Colonic mucosa (tissue), 4 donors: ENCODE measurements at regions of chr12 and their contacts with region 1.

Region 1: DNA sequence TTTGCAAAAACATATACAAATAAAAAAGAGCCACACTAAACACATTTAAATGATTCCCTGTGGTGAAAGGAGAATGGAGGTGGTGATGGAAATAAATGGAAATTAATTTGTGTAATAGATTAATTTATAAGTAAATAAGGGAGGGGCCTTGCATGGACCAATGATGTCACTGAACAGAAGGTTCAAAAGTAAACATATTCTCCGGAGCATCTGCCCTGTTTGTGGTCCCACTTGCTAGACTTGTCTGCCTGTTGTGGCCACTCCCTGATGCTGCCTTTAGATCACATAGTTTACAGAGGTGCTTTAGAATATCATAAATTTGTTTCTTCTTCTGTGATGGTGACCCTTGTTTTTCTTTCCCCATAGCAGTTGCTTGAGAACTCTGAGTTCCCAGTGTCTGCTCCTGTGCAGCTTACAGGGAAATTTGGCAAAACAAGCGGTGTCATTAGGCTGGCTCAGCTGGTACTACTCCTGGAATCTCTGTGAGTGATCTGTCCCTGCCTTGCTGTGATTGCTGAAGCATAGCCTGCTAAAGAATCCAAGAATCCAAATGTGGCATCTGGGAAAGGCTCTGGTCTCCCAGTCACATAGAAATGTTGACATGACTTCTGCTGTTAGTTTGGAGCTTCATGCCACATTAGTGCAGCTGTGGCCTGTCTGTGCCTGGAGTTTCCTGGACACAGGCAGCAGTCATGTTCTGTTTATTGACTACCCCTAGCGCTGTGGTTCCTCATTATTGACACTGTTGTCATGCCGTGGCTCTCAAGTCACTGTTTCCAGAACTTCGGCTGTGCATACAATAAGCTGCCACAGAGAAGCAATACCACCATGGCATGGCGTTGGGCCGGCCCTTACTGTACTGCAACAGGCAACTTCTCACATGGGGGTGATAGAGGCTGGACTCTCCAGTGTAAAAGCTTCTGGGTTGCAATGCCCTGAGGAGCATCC is 166.6 kb downstream of the MYRFL start:
- DNase-seq: no peak
- H3K4me3 ChIP-seq: no peak overlapping the region
- H3K27ac ChIP-seq: no peak overlapping the region
- H3K4me1 ChIP-seq: no peaks in the 10 kb centered on the region
- H3K27me3 ChIP-seq: no peaks in the 10 kb centered on the region
- CTCF ChIP-seq: no peak

Region 2: DNA sequence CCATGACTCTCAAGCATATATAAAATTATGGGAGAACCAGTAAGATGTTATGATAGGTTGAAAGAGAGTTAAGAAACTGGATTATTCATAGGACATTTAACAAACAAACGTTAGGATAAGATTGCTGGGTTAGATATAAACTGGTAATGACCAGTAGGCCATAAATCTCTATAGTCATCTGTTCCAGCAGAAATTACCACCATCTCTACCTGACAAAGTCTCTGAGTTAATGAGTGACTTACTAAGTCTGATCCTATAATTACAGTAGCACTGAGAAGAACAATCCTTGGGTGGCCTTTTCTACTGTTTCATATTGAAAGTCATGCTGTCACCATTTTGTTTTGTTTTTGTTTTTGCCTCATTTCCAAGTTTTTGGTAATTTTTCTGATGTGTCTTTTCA is 114.7 kb after region 1 on chr12:
- intact Hi-C with region 1: loop called (anchors 10 kb)
- DNase-seq: no peak
- H3K4me3 ChIP-seq: no peak overlapping the region
- H3K27ac ChIP-seq: no peak overlapping the region
- H3K4me1 ChIP-seq: no peaks in the 10 kb centered on the region
- H3K27me3 ChIP-seq: no peaks in the 10 kb centered on the region
- CTCF ChIP-seq: no peak

Region 3: GRCh38 chr12:70242695-70243509 is 251.3 kb after region 1 on chr12 and contains the start of gene CNOT2:
- intact Hi-C with region 1: loop called (anchors 10 kb)
- DNase-seq: peak; percentile 92
- H3K4me3 ChIP-seq: peak within 1 kb of the TSS; percentile 69
- H3K27ac ChIP-seq: peak within 1 kb of the TSS; percentile 95
- H3K4me1 ChIP-seq: peaks cover 8% of the 10 kb centered on the region
- H3K27me3 ChIP-seq: no peaks in the 10 kb centered on the region
- CTCF ChIP-seq: no peak
- total RNA-seq, gene CNOT2: 55.2 to 80.3 TPM